ENCODE measurements at regions of chr1 and their contacts with region 1.

Region 1: GRCh38 chr1:179365320-179366092 is at the start of gene AXDND1:
- DNase-seq: peak; percentile 69 to 76
- H3K4me3 ChIP-seq: peak within 1 kb of the TSS; percentile 80
- H3K27ac ChIP-seq: peak within 1 kb of the TSS; percentile 79
- H3K4me1 ChIP-seq: peaks cover 4% of the 10 kb centered on the region; the same call in 1 of the 2 replicates
- H3K27me3 ChIP-seq: no peaks in the 10 kb centered on the region
- CTCF ChIP-seq: peak; percentile 32; the same call in 1 of the 2 replicates
- total RNA-seq, gene AXDND1: 1.8 and 3.4 TPM in 2 replicates

Region 2: GRCh38 chr1:177948336-177948972 is 1417.1 kb before region 1 on chr1:
- CTCF ChIA-PET with region 1: no interaction called
- POLR2A ChIA-PET with region 1: no interaction called
- intact Hi-C with region 1: loop called (anchors 5 kb)
- DNase-seq: peak; percentile 60 to 63
- H3K4me3 ChIP-seq: no peak overlapping the region
- H3K27ac ChIP-seq: no peak overlapping the region
- H3K4me1 ChIP-seq: no peaks in the 10 kb centered on the region
- H3K27me3 ChIP-seq: no peaks in the 10 kb centered on the region
- CTCF ChIP-seq: peak; percentile 94

Region 3: DNA sequence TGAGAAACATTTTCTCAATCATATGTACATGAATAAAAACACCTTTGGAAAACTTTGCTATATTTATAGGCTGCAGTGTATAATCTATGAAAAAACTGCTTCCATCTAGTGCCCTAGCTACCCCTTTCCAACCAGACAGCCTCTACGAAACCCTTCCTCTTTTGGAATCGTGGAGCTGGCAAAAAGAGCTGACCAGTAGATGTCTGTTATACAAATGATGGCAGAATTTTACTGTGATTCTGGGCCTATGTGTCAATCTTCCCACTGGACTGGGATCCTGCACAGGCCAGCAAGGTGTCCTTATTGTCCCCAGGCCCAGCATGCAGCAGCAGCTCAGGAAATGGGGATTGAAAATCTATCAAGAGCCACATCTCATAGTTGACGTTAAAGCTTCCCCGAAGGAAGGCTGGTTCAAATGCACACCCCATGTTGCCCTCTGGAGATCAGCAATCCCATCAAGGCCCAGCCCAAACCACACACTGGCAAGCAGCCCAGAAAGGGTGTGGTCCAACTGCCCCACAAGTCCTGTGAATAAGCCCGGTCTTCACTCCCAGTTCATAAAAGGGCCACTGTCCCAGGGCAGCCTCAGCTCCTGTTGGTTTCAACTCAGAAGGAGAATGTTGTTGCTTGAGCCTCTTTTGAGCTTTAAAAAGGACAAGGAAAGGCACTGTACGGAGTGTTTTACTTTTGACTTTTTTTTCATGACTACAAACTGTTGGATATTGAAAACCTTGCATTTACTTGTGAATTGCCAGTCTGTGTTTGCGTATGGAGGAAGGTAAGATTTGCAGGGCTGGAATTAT is 348.6 kb before region 1 on chr1:
- CTCF ChIA-PET with region 1: no interaction called
- POLR2A ChIA-PET with region 1: no interaction called
- intact Hi-C with region 1: loop called (anchors 5 kb)
- DNase-seq: peak; percentile 94 to 95
- H3K4me3 ChIP-seq: peak overlapping the region; percentile 28; the same call in 1 of the 2 replicates
- H3K27ac ChIP-seq: peak overlapping the region; percentile 76
- H3K4me1 ChIP-seq: peaks cover 39% of the 10 kb centered on the region
- H3K27me3 ChIP-seq: no peaks in the 10 kb centered on the region
- CTCF ChIP-seq: no peak

Region 4: GRCh38 chr1:179121159-179121938 is 244.2 kb before region 1 on chr1:
- CTCF ChIA-PET with region 1: no interaction called
- POLR2A ChIA-PET with region 1: no interaction called
- intact Hi-C with region 1: loop called (anchors 1 kb)
- DNase-seq: peak; percentile 15 to 40
- H3K4me3 ChIP-seq: no peak overlapping the region
- H3K27ac ChIP-seq: no peak overlapping the region
- H3K4me1 ChIP-seq: no peaks in the 10 kb centered on the region; the same call in 1 of the 2 replicates
- H3K27me3 ChIP-seq: no peaks in the 10 kb centered on the region
- CTCF ChIP-seq: peak; percentile 78

Region 5: DNA sequence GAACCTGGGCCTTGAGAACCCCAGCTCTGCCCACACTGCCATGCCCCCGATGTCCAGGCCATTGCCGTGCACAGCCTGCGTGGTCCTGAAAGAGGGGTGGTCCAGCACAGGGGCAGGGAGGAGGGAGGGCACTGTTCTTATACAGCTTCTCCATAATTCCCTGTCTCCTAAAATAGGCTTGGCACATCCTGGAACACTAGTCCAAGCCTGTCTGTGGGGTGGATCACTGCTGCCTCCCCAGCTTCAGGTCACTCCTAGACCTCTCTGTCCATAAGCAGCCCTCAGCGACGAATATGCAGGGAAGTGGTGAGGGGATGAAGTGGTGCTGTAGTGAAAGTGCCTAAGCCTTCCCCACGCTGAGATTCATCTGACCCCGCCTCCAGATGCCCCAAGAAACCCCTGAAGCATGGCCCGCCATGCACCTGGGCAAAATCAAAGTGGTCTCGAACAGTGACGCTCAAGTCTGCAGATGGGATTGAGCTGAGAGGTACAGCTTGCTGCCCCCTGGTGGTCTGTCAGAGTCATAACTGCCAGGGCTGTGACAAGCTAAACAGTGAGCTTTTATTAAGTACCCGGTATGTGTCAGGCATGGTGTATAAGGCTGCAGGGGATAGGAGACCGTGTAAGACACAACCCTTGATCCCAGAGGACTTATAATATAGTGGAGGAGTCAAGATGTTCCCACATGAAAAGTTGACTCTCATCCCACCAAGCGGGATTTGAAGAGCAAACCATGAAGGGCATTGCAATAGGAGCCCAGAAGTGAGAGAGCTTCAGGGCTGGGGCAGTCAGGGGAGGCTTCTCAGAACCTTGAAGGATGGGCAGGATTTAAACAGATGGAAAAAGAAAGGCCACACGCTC is 444.2 kb after region 1 on chr1:
- CTCF ChIA-PET with region 1: no interaction called
- POLR2A ChIA-PET with region 1: no interaction called
- intact Hi-C with region 1: loop called (anchors 10 kb)
- DNase-seq: peak; percentile 46 to 53
- H3K4me3 ChIP-seq: no peak overlapping the region
- H3K27ac ChIP-seq: no peak overlapping the region
- H3K4me1 ChIP-seq: no peaks in the 10 kb centered on the region
- H3K27me3 ChIP-seq: peaks cover 46% of the 10 kb centered on the region
- CTCF ChIP-seq: peak; percentile 93